ENCODE measurements at regions of chr10 and their contacts with region 1.

Region 1: GRCh38 chr10:102001435-102002068 is 54.4 kb downstream of the ARMH3 start:
- DNase-seq: peak; percentile 95
- ATAC-seq: peak; percentile 84
- H3K4me3 ChIP-seq: peak overlapping the region; percentile 12; the same call in 1 of the 2 replicates
- H3K27ac ChIP-seq: peak overlapping the region; percentile 91
- H3K4me1 ChIP-seq: peaks cover 47% of the 10 kb centered on the region
- H3K27me3 ChIP-seq: no peaks in the 10 kb centered on the region
- CTCF ChIP-seq: no peak
- EP300 ChIP-seq: peak; percentile 93 to 98; a peak in 3 of 4 replicates
- POLR2A ChIP-seq: no peak
- RAD21 ChIP-seq: no peak

Region 2: GRCh38 chr10:101879456-101880231 is 121.9 kb before region 1 on chr10:
- CTCF ChIA-PET with region 1: interaction called, 543 read pairs
- POLR2A ChIA-PET with region 1: interaction called, 4 read pairs
- RAD21 ChIA-PET with region 1: interaction called, 467 read pairs
- SMC1A ChIA-PET with region 1: interaction called, 78 read pairs
- in situ Hi-C with region 1: loop called (anchors 5 kb)
- intact Hi-C with region 1: no loop called
- DNase-seq: no peak
- ATAC-seq: no peak
- H3K4me3 ChIP-seq: no peak overlapping the region
- H3K27ac ChIP-seq: no peak overlapping the region
- H3K4me1 ChIP-seq: peaks cover 9% of the 10 kb centered on the region
- H3K27me3 ChIP-seq: no peaks in the 10 kb centered on the region
- CTCF ChIP-seq: no peak
- EP300 ChIP-seq: no peak
- POLR2A ChIP-seq: no peak
- RAD21 ChIP-seq: no peak

Region 3: GRCh38 chr10:101897633-101898032 is 103.9 kb before region 1 on chr10:
- CTCF ChIA-PET with region 1: interaction called, 543 read pairs
- POLR2A ChIA-PET with region 1: interaction called, 26 read pairs
- RAD21 ChIA-PET with region 1: interaction called, 352 read pairs
- SMC1A ChIA-PET with region 1: interaction called, 408 read pairs
- in situ Hi-C with region 1: no loop called
- intact Hi-C with region 1: loop called (anchors 1 kb)
- DNase-seq: no peak
- ATAC-seq: no peak
- H3K4me3 ChIP-seq: no peak overlapping the region
- H3K27ac ChIP-seq: peak overlapping the region; percentile 29
- H3K4me1 ChIP-seq: peaks cover 44% of the 10 kb centered on the region
- H3K27me3 ChIP-seq: no peaks in the 10 kb centered on the region
- CTCF ChIP-seq: no peak
- EP300 ChIP-seq: no peak
- POLR2A ChIP-seq: no peak
- RAD21 ChIP-seq: no peak

Region 4: DNA sequence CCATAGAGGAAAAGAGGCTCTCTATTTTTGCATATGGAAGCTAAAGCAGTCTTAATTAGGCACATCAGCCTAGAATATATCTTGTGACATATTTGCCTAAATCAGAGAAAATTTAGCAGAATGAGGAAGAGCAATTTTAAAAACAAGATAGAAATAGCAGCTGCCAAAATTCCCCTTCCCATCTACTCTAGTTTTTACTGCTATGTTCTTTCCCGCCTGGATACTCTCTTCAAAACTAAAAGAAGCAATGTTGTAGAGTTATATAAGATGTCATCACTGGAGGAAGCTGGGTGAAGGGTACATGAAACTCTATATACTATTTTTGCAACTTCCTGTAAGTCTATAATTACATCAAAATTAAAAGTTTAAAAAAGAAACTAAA is 32.6 kb before region 1 on chr10:
- CTCF ChIA-PET with region 1: interaction called, 73 read pairs
- POLR2A ChIA-PET with region 1: interaction called, 67 read pairs
- RAD21 ChIA-PET with region 1: interaction called, 45 read pairs
- SMC1A ChIA-PET with region 1: interaction called, 298 read pairs
- in situ Hi-C with region 1: no loop called
- intact Hi-C with region 1: loop called (anchors 1 kb)
- DNase-seq: peak; percentile 76
- ATAC-seq: peak; percentile 72
- H3K4me3 ChIP-seq: no peak overlapping the region
- H3K27ac ChIP-seq: peak overlapping the region; percentile 99
- H3K4me1 ChIP-seq: peaks cover 80% of the 10 kb centered on the region
- H3K27me3 ChIP-seq: no peaks in the 10 kb centered on the region
- CTCF ChIP-seq: no peak
- EP300 ChIP-seq: peak in 1 of 2 experiments; percentile 74
- POLR2A ChIP-seq: no peak
- RAD21 ChIP-seq: no peak

Region 5: GRCh38 chr10:101974091-101974971 is 27.2 kb before region 1 on chr10:
- CTCF ChIA-PET with region 1: interaction called, 73 read pairs
- POLR2A ChIA-PET with region 1: interaction called, 67 read pairs
- RAD21 ChIA-PET with region 1: interaction called, 45 read pairs
- SMC1A ChIA-PET with region 1: interaction called, 298 read pairs
- in situ Hi-C with region 1: no loop called
- intact Hi-C with region 1: loop called (anchors 1 kb)
- DNase-seq: no peak
- ATAC-seq: no peak
- H3K4me3 ChIP-seq: 0 out of 2 replicates have a peak overlapping the region, but pooled peaks have one; percentile 42
- H3K27ac ChIP-seq: peak overlapping the region; percentile 99
- H3K4me1 ChIP-seq: peaks cover 50% of the 10 kb centered on the region
- H3K27me3 ChIP-seq: no peaks in the 10 kb centered on the region
- CTCF ChIP-seq: no peak
- EP300 ChIP-seq: no peak
- POLR2A ChIP-seq: no peak
- RAD21 ChIP-seq: no peak

Region 6: GRCh38 chr10:101986625-101986973 is 15.0 kb before region 1 on chr10:
- CTCF ChIA-PET with region 1: interaction called, 7 read pairs
- POLR2A ChIA-PET with region 1: interaction called, 8 read pairs
- RAD21 ChIA-PET with region 1: interaction called, 13 read pairs
- SMC1A ChIA-PET with region 1: interaction called, 11 read pairs
- in situ Hi-C with region 1: no loop called
- intact Hi-C with region 1: no loop called
- DNase-seq: no peak
- ATAC-seq: peak; percentile 94
- H3K4me3 ChIP-seq: peak overlapping the region; percentile 25; the same call in 1 of the 2 replicates
- H3K27ac ChIP-seq: peak overlapping the region; percentile 88
- H3K4me1 ChIP-seq: peaks cover 16% of the 10 kb centered on the region
- H3K27me3 ChIP-seq: no peaks in the 10 kb centered on the region
- CTCF ChIP-seq: no peak
- EP300 ChIP-seq: no peak
- POLR2A ChIP-seq: no peak
- RAD21 ChIP-seq: no peak

Measured in GM12878 (cell line).